H1 (cell line): ENCODE measurements at regions of chr20 and their contacts with region 1.

Region 1: GRCh38 chr20:57061058-57061900 is 205.2 kb downstream of the BMP7 start:
- DNase-seq: peak in 1 of 2 experiments; percentile 75
- H3K4me3 ChIP-seq: no peak overlapping the region
- H3K27ac ChIP-seq: no peak overlapping the region
- H3K4me1 ChIP-seq: no peaks in the 10 kb centered on the region
- H3K27me3 ChIP-seq: no peaks in the 10 kb centered on the region; a peak in 1 of 7 replicates
- CTCF ChIP-seq: peak; percentile 65 to 81 (median 66)
- EP300 ChIP-seq: no peak
- POLR2A ChIP-seq: no peak
- RAD21 ChIP-seq: peak; percentile 89

Region 2: DNA sequence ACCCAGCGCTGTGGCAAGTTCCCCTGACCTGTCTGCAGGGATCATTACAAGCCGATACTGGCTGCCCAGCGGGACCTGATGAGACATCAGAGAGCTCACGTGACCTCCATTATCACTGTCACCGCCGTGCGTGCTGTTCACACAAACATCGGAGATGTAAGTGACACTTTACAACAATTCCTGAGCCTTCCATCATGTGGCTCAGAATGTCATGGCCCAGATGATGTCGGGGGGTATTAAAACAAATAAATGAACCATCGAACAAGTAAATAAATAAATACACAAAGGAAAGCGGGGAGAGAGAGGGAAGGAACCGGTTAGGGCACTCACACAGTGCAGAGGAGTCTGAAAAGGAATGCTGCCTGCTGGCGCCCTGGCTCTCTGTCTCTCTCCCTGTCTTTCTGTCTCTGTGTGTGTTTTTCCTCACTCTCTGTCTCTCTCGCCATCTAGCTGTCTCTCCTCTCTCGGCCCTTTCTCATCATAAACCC is 10.0 kb after region 1 on chr20:
- CTCF ChIA-PET with region 1: interaction called, 24 read pairs
- POLR2A ChIA-PET with region 1: no interaction called
- DNase-seq: peak in 1 of 2 experiments; percentile 69
- H3K4me3 ChIP-seq: peak overlapping the region; percentile 42 to 59 (median 52); a peak in 7 of 8 replicates
- H3K27ac ChIP-seq: no peak overlapping the region
- H3K4me1 ChIP-seq: peaks cover 4 to 18% (median 9%) of the 10 kb centered on the region in 4 experiments
- H3K27me3 ChIP-seq: peaks cover 4 to 27% (median 19%) of the 10 kb centered on the region in 4 experiments
- CTCF ChIP-seq: no peak
- EP300 ChIP-seq: no peak; a peak in 1 of 3 replicates
- POLR2A ChIP-seq: no peak
- RAD21 ChIP-seq: no peak

Region 3: GRCh38 chr20:57102566-57103451 is 41.5 kb after region 1 on chr20:
- CTCF ChIA-PET with region 1: no interaction called
- POLR2A ChIA-PET with region 1: no interaction called
- DNase-seq: no peak
- H3K4me3 ChIP-seq: no peak overlapping the region
- H3K27ac ChIP-seq: no peak overlapping the region
- H3K4me1 ChIP-seq: no peaks in the 10 kb centered on the region
- H3K27me3 ChIP-seq: no peaks in the 10 kb centered on the region
- CTCF ChIP-seq: no peak
- EP300 ChIP-seq: no peak
- POLR2A ChIP-seq: no peak
- RAD21 ChIP-seq: no peak